Transverse colon (tissue), 4 donors: ENCODE measurements at regions of chr9 and their contacts with region 1.

Region 1: DNA sequence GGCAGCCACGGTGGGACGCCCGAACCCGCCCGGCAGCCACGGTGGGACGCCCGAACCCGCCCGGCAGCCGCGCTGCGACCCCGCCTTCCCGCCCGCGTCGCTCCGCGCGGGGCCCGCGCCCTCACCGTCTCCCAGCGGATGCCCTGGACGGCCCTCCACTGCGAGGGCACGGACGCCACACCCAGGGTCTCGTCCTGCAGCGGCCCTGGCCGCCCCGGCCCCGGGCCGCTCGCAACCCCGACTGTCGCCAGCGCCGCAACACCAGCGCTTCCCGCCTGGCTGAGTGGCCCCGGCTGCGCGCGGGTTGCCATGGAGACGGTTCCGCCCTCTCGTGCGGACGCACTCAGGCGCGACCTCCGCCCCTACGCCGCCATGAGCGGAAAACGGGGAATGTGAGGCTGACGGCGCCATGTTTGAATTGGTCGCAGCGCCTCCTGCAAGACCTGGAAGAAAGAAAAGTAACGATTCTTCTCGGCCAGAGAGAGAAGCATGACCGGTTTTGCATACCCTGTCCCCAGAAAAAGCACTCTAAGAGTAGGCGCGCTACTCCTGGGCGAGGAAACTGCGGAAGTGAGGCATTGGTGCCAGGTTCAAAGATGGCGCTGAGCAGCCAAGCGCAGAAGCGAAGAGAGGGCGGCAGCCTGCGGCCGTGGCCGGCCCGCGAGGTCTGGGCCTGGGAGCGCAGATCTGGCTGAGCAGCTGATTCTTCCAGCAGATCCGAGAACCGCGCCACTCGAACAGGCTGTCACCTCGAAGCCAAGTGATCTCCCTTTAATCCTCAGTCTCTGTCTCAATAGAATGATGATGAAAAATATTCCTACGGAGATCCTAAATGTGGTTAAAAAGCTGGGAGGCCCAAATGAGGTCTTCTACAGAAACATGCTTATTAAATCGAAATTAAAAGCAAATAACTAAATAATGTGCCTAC is at the start of gene DYNC2I2:
- DNase-seq: peak; percentile 98
- H3K4me3 ChIP-seq: peak within 1 kb of the TSS; percentile 48 to 87 (median 82)
- H3K27ac ChIP-seq: peak within 1 kb of the TSS; percentile 92 to 99 (median 96)
- H3K4me1 ChIP-seq: peaks cover 0 to 11% (median 8%) of the 10 kb centered on the region in 4 donors
- H3K27me3 ChIP-seq: no peaks in the 10 kb centered on the region
- CTCF ChIP-seq: peak in 1 of 5 experiments; percentile 14
- EP300 ChIP-seq: no peak
- POLR2A ChIP-seq: peak; percentile 60
- total RNA-seq, gene DYNC2I2: 41.4 to 160 (median 94.9) TPM

Region 2: GRCh38 chr9:128688512-128689292 is 32.0 kb after region 1 on chr9 and contains the start of gene SET:
- in situ Hi-C with region 1: no loop called
- intact Hi-C with region 1: loop called (anchors 2 kb)
- DNase-seq: peak; percentile 96
- H3K4me3 ChIP-seq: peak within 1 kb of the TSS; percentile 85 to 97 (median 94)
- H3K27ac ChIP-seq: peak within 1 kb of the TSS; percentile 95 to 99 (median 98)
- H3K4me1 ChIP-seq: peaks cover 26 to 50% (median 39%) of the 10 kb centered on the region in 4 donors
- H3K27me3 ChIP-seq: no peaks in the 10 kb centered on the region
- CTCF ChIP-seq: no peak
- EP300 ChIP-seq: no peak
- POLR2A ChIP-seq: peak; percentile 55
- total RNA-seq, gene SET: 29.2 to 153 (median 64.4) TPM